GM10248 (cell line): ENCODE measurements at regions of chr2 and their contacts with region 1.

Region 1: GRCh38 chr2:157182834-157183396 is 74.6 kb upstream of the GALNT5 start:
- DNase-seq: no peak
- CTCF ChIP-seq: no peak

Region 2: DNA sequence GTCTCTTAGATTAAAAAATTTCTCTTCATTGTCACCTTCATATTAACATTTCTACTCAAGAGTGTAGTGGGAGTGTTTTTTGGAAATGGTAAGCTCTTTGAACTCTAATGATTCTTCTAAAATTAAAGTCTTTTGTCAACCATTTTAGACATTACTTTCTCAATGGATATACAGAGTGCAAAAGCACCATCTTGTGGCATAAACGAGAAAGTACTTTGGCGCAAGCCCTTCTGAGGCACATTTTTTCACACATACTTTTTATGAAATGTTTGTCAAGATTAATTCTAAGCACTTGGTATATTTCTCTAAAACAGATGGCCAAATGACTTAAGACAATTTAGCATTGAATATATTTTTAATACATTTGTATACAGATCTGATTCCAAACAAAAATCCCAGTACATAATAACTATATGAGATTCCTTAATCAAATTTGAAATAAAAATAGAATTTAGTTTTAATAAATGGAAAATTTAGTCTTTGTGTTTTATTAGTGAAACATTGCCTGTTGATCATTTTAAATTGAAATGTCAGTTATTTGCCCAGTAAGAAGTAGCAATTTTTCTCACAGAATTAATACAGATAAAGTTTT is 11.3 kb after region 1 on chr2:
- CTCF ChIA-PET with region 1: interaction called, 25 read pairs
- POLR2A ChIA-PET with region 1: no interaction called
- DNase-seq: peak; percentile 49
- CTCF ChIP-seq: peak; percentile 73